AG04450 (cell line): ENCODE measurements at regions of chr4 and their contacts with region 1.

Region 1: GRCh38 chr4:52545099-52546069 is 113.7 kb downstream of the USP46 start:
- DNase-seq: peak; percentile 33
- H3K4me3 ChIP-seq: no peak overlapping the region
- H3K27ac ChIP-seq: no peak overlapping the region
- H3K27me3 ChIP-seq: no peaks in the 10 kb centered on the region
- CTCF ChIP-seq: peak; percentile 99

Region 2: DNA sequence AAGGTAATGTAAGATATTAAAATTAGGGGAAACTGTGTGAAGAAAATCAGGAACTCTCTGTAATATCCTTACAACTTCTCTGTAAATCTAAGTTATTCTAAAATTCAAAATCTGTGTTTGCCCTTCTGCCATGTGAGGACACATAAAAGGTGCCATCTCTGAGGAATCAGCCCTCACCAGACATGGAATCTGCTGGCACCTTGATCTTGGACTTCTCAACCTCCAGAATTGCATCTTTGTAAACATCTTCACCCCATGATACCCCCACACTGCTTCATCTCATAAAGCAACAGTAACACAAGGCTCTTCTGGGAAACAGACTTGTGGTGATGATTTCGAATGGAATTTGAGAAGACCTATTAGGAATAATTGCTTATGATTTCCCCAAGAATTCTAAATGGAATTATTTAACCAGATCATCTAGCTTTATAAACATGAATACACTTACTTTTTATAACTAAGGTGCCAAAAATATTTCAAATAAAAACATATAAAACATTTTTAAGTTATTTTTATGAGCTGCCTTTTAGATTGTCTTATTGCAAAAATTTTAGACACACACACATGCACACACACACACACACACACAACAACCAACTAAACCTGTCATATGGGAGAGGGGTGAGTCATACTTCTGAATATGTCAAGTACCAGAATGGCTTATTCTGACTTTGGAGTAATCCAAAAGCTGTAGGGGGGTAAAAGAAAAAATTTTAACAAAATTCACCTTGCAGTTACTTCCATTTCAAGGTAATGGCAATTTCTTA is 31.7 kb after region 1 on chr4:
- CTCF ChIA-PET with region 1: interaction called, 11 read pairs
- POLR2A ChIA-PET with region 1: no interaction called
- DNase-seq: no peak
- H3K4me3 ChIP-seq: no peak overlapping the region
- H3K27ac ChIP-seq: no peak overlapping the region
- H3K27me3 ChIP-seq: no peaks in the 10 kb centered on the region
- CTCF ChIP-seq: no peak

Region 3: DNA sequence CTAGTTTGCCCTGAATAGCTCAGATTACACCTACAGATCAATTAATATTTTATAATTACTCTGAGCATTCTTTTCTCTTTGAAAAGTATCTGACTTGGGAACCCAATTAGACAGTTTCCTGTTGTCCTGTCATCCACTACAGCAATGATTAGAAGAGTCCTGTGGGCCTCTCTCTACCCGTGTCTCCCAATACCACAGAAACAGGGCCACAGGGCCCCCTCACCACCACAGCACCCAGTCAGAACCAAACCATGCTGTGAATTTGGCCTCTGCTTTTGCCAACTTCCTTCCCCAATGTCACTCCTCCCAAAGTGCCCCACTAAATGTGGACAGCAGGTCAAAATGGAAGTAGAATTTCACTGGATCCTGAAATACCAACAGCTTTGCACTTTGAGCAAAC is 103.5 kb after region 1 on chr4:
- CTCF ChIA-PET with region 1: interaction called, 22 read pairs
- POLR2A ChIA-PET with region 1: no interaction called
- DNase-seq: no peak
- H3K4me3 ChIP-seq: no peak overlapping the region
- H3K27ac ChIP-seq: no peak overlapping the region
- H3K27me3 ChIP-seq: no peaks in the 10 kb centered on the region
- CTCF ChIP-seq: no peak

Region 4: GRCh38 chr4:52712172-52712990 is 167.0 kb after region 1 on chr4:
- CTCF ChIA-PET with region 1: interaction called, 15 read pairs
- POLR2A ChIA-PET with region 1: interaction called, 4 read pairs
- DNase-seq: peak; percentile 81
- H3K4me3 ChIP-seq: peak overlapping the region; percentile 90
- H3K27ac ChIP-seq: peak overlapping the region; percentile 33
- H3K27me3 ChIP-seq: peaks cover 2% of the 10 kb centered on the region
- CTCF ChIP-seq: no peak

Region 5: GRCh38 chr4:52864793-52865192 is 319.4 kb after region 1 on chr4:
- CTCF ChIA-PET with region 1: interaction called, 15 read pairs
- POLR2A ChIA-PET with region 1: no interaction called
- DNase-seq: no peak
- H3K4me3 ChIP-seq: no peak overlapping the region
- H3K27ac ChIP-seq: no peak overlapping the region
- H3K27me3 ChIP-seq: peaks cover 19% of the 10 kb centered on the region
- CTCF ChIP-seq: no peak

Region 6: DNA sequence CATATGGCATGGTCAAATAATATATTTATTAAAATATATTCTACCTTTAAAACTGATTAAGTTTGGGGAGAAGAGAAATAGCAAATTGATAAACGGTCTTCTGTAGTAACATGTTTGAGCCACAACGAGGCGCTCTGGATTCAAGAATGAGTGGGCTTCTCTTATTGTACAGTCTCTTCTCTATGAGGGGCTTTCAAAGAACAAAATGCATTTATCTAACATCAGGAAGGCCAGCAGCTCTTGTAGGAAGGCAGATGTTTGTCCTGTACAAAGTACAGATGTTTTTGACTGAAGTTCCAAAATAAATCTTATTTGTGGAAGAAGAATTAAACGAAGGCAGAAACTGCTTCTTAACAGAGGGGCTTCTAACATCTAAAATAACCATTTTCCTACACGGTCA is 470.3 kb after region 1 on chr4:
- CTCF ChIA-PET with region 1: interaction called, 11 read pairs
- POLR2A ChIA-PET with region 1: no interaction called
- DNase-seq: no peak
- H3K4me3 ChIP-seq: no peak overlapping the region
- H3K27ac ChIP-seq: no peak overlapping the region
- H3K27me3 ChIP-seq: no peaks in the 10 kb centered on the region
- CTCF ChIP-seq: peak; percentile 80